ENCODE measurements at regions of chrX and their contacts with region 1.

Region 1: DNA sequence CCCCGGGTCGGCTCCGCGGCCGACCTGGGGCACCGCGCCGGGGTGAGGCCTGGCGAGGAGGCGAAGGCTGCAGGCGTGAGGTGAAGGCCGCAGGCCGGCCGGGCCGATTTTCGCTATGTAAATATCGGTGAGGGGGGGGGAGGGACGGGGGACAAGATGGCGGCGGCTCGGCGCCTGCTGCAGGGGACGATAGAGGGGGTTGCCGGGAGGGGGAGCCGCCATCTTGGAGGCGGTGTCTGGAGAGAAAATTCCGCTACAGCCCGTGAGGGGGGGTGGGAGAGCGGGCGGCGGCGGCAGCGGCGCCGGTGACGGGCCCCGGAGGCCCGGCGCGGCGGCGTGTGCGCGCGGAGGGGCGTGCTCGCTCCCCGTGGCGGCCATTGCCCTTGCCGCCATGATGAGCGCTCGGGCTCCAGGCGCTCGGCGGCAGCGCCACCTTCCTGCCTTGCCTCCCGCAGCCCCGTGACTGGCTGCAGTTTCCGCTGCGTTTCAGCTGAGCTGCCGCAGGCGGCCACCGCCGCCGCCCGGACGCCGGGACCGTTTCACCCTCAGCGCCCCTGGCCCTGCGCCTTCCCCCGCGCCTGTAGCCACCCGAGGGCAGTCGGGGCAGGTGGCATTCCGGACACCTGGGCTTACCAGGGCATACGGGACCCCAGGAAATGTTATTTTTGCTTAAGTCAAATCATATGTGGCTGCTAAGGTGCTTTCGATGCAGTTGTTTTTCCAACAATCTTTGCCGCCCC is 692 bp downstream of the ZFX start:
- DNase-seq: peak; percentile 72
- ATAC-seq: peak; percentile 68
- H3K4me3 Mint-ChIP-seq: peak overlapping the region; percentile 86
- H3K27ac Mint-ChIP-seq: peak overlapping the region; percentile 86
- H3K4me1 Mint-ChIP-seq: peaks cover 61% of the 10 kb centered on the region
- H3K27me3 Mint-ChIP-seq: no peaks in the 10 kb centered on the region
- CTCF ChIP-seq: no peak

Region 2: DNA sequence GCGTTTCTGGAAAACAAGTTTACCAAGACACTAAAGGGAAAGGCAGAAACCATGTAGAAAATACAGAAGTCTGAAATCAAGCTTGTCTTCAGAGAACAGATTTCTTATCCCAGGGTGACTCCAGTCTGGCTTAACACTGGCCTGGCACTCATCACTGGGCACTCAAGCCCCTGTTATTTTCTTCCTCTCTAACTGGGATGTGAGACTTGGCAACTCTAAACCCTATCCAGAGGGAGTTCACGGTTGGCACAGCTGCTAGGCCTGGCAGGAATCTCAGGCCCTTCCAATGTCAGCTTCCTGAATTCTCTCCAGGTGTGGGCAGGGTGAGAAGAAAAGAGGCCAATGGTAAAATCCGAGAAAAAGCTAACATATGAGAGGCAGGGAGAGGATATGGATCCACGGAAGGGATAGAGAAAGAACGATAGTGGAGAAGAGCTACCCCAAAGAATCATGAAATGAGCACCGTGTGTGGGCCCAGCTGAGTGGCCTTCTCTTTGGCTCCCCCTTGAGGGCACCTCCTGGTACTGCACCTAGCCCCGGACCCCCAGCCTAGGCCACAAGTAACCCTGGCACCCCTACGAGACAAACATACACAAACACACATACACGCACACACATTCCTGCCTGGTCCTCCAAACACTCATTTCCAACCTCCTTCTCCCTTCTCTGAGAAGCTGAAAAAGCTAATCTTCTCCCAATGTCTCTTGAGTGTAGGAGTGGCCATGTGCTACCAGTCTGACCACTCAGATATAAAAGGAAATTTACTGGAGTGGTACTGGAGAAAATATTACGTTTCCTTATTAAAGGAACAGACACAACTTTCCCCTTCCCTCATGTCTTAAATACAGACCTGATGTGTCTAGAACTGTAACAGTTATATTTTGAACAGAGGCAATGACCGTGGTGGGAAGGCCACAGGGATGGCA is 832.2 kb before region 1 on chrX:
- CTCF ChIA-PET with region 1: no interaction called
- POLR2A ChIA-PET with region 1: no interaction called
- intact Hi-C with region 1: no loop called
- DNase-seq: no peak
- ATAC-seq: peak; percentile 57
- H3K4me3 Mint-ChIP-seq: no peak overlapping the region
- H3K27ac Mint-ChIP-seq: no peak overlapping the region
- H3K4me1 Mint-ChIP-seq: no peaks in the 10 kb centered on the region
- H3K27me3 Mint-ChIP-seq: no peaks in the 10 kb centered on the region
- CTCF ChIP-seq: no peak

Region 3: GRCh38 chrX:23694606-23695005 is 455.6 kb before region 1 on chrX:
- CTCF ChIA-PET with region 1: no interaction called
- POLR2A ChIA-PET with region 1: no interaction called
- intact Hi-C with region 1: loop called (anchors 10 kb)
- DNase-seq: no peak
- ATAC-seq: peak; percentile 78
- H3K4me3 Mint-ChIP-seq: no peak overlapping the region
- H3K27ac Mint-ChIP-seq: no peak overlapping the region
- H3K4me1 Mint-ChIP-seq: no peaks in the 10 kb centered on the region
- H3K27me3 Mint-ChIP-seq: no peaks in the 10 kb centered on the region
- CTCF ChIP-seq: no peak

Region 4: GRCh38 chrX:23952984-23953907 is 197.0 kb before region 1 on chrX:
- CTCF ChIA-PET with region 1: no interaction called
- POLR2A ChIA-PET with region 1: no interaction called
- intact Hi-C with region 1: loop called (anchors 5 kb)
- DNase-seq: peak; percentile 13
- ATAC-seq: peak; percentile 92
- H3K4me3 Mint-ChIP-seq: peak overlapping the region; percentile 72
- H3K27ac Mint-ChIP-seq: peak overlapping the region; percentile 90
- H3K4me1 Mint-ChIP-seq: peaks cover 12% of the 10 kb centered on the region
- H3K27me3 Mint-ChIP-seq: no peaks in the 10 kb centered on the region
- CTCF ChIP-seq: no peak

Region 5: DNA sequence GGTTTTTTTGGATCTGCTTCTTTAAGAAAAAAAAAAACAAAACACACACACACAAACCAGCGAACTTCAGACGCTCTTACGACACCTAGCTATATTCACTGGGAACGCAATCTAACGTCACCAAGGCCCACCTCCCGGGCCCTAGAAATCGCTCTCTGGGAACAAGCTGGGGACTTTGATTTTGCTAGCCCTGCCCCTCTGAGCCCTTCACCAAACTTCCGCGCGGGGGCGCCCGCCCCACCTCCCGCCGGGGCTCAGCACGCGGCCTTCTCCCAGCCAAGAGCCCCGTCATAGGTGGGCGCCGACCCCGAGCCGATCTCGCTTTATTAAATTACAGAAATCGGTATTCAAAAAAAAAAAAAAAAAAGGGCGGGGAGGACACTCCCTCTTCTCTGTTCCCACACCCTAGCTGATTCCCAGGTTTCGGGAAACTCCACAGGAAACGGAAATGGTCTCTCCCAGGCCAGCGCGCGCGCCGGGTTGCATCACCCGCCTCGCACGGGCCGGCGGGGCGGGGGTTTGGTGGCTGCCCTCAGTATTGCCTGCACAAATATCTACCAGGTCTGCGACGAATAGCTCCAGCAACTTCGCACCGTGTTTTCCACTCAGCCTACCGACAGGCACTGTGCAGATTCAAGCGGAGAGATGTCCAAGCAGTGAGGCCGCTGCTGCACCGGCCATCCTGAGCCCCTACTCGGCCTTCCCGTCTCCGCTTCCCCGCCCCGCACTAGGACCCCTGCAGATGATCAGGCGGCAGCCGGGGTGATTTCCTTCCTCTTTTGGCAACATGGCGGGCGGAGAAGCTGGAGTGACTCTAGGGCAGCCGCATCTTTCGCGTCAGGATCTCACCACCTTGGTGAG is 95.8 kb before region 1 on chrX and contains the start of gene EIF2S3:
- CTCF ChIA-PET with region 1: no interaction called
- POLR2A ChIA-PET with region 1: interaction called, 32 read pairs
- intact Hi-C with region 1: loop called (anchors 1 kb)
- DNase-seq: peak; percentile 73
- ATAC-seq: peak; percentile 80
- H3K4me3 Mint-ChIP-seq: no peak within 1 kb of the TSS
- H3K27ac Mint-ChIP-seq: peak within 1 kb of the TSS; percentile 99
- H3K4me1 Mint-ChIP-seq: peaks cover 4% of the 10 kb centered on the region
- H3K27me3 Mint-ChIP-seq: no peaks in the 10 kb centered on the region
- CTCF ChIP-seq: no peak
- total RNA-seq, gene EIF2S3: 281 and 314 TPM in 2 replicates

Region 6: GRCh38 chrX:24169211-24169610 is 19.0 kb after region 1 on chrX:
- CTCF ChIA-PET with region 1: no interaction called
- POLR2A ChIA-PET with region 1: no interaction called
- intact Hi-C with region 1: loop called (anchors 1 kb)
- DNase-seq: no peak
- ATAC-seq: peak; percentile 90
- H3K4me3 Mint-ChIP-seq: peak overlapping the region; percentile 45
- H3K27ac Mint-ChIP-seq: peak overlapping the region; percentile 81
- H3K4me1 Mint-ChIP-seq: peaks cover 50% of the 10 kb centered on the region
- H3K27me3 Mint-ChIP-seq: no peaks in the 10 kb centered on the region
- CTCF ChIP-seq: no peak

Region 7: DNA sequence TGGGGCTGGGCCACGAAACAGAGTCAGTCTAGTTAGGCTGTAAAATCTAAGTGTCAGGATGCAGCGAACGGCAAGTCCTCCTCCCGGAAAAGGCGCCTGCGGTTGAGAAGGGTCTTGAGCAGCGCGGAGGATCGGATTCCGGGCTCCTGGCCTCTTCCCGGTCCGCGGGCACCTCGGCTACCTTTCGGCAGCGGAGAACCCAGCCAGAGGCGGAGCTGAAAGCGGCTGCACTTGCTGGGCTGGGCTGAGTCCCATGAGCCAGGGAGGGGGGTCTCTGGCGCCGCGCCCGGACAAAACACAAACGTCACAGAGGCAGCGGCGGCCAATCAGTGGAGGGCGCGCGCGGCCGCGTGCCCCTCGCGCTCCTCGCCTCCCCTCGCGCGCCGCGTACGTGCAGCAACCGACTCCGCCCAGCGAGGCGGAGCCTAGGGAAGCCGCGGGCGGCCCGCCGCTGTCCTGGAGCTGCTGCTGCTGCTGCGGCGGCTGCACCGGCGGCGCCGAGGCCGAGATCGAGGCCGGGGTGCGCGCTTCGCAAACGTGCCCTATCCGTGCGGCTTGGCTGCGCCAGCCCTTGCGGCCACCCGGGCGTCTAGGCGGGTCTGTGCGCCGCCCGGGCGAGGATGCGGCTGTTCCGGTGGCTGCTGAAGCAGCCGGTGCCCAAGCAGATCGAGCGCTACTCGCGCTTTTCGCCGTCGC is 314.8 kb after region 1 on chrX and contains the start of gene PDK3:
- CTCF ChIA-PET with region 1: no interaction called
- POLR2A ChIA-PET with region 1: no interaction called
- intact Hi-C with region 1: loop called (anchors 5 kb)
- DNase-seq: peak; percentile 77
- ATAC-seq: peak; percentile 95
- H3K4me3 Mint-ChIP-seq: peak within 1 kb of the TSS; percentile 84
- H3K27ac Mint-ChIP-seq: peak within 1 kb of the TSS; percentile 83
- H3K4me1 Mint-ChIP-seq: peaks cover 47% of the 10 kb centered on the region
- H3K27me3 Mint-ChIP-seq: no peaks in the 10 kb centered on the region
- CTCF ChIP-seq: no peak
- total RNA-seq, gene PDK3: 13.6 and 13.9 TPM in 2 replicates

Measured in activated B cell treated with CpG ODN at 0.5 μM for 24 hours (primary cell).